ENCODE measurements at regions of chr12 and their contacts with region 1.

Region 1: GRCh38 chr12:110555577-110556406 is 27.3 kb downstream of the PPTC7 start:
- DNase-seq: no peak
- H3K4me3 Mint-ChIP-seq: no peak overlapping the region
- H3K27ac Mint-ChIP-seq: no peak overlapping the region
- H3K4me1 Mint-ChIP-seq: peaks cover 60% of the 10 kb centered on the region
- H3K27me3 Mint-ChIP-seq: no peaks in the 10 kb centered on the region

Region 2: DNA sequence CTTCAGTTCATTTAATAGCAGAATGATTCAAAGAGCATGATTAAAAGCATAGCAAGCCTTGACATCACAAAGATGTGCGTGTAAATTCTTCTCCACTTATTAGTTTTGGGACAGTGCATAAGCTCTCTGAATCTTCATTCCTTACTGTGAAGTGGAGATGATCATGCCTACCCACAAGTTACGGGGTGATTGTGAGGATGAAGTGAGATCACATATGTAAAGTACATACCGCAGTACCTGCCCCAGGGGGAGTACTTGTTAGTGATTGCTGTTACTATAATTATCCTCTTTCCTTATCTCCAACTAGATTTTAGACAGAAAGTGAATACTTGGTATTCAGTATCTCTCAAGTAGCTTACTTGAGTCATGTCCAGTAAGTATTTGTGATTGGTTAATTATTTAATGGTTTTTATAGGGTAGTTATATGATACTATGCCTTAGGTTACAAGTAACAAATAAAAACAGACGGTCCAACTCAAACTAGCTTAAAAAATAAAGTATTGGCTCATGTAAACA is 47.7 kb before region 1 on chr12:
- CTCF ChIA-PET with region 1: interaction called, 5 read pairs
- intact Hi-C with region 1: loop called (anchors 1 kb)
- DNase-seq: no peak
- H3K4me3 Mint-ChIP-seq: no peak overlapping the region
- H3K27ac Mint-ChIP-seq: no peak overlapping the region
- H3K4me1 Mint-ChIP-seq: no peaks in the 10 kb centered on the region
- H3K27me3 Mint-ChIP-seq: no peaks in the 10 kb centered on the region

Region 3: GRCh38 chr12:110590806-110591326 is 35.1 kb after region 1 on chr12:
- CTCF ChIA-PET with region 1: interaction called, 8 read pairs
- intact Hi-C with region 1: loop called (anchors 2 kb)
- DNase-seq: no peak
- H3K4me3 Mint-ChIP-seq: peak overlapping the region; percentile 21
- H3K27ac Mint-ChIP-seq: peak overlapping the region; percentile 90
- H3K4me1 Mint-ChIP-seq: peaks cover 31% of the 10 kb centered on the region
- H3K27me3 Mint-ChIP-seq: no peaks in the 10 kb centered on the region

Region 4: DNA sequence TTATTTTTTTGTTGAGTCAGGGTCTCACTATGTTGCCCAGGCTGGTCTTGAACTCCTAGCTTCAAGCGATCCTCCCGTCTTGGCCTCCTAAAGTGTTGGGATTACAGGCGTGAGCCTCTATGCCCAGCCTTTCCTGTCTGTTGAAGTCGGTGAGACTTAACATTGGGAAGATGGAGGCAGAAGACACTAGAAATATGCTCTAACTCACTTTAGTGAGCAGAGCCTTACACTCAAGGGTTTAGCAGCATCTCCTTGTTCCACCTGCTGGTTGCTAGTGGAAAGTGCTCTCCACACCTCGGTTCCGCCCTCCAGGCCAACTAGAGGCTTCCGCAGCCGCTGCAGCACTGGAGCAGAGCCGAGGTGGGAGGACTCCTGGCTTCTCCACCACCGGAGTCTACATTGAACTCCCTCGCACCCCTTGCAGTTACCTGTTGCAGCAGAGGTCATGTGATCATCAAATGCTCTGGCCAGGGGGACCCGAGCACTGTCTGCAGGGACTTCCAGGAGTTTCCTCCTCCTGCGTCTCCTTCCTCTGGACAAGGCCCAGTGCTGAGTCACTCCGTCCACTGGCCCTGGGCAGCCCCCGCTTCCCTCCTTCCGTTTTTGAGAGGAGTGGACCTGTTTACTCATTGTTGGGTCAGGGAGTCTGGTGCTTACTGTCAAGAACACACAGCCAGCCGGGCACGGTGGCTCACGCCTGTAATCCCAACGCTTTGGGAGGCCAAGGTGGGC is 142.5 kb after region 1 on chr12:
- CTCF ChIA-PET with region 1: no interaction called
- intact Hi-C with region 1: loop called (anchors 2 kb)
- DNase-seq: peak; percentile 90
- H3K4me3 Mint-ChIP-seq: no peak overlapping the region
- H3K27ac Mint-ChIP-seq: peak overlapping the region; percentile 57
- H3K4me1 Mint-ChIP-seq: peaks cover 17% of the 10 kb centered on the region
- H3K27me3 Mint-ChIP-seq: no peaks in the 10 kb centered on the region

Region 5: GRCh38 chr12:111434680-111435338 is 879.0 kb after region 1 on chr12:
- CTCF ChIA-PET with region 1: no interaction called
- intact Hi-C with region 1: no loop called
- DNase-seq: peak; percentile 89
- H3K4me3 Mint-ChIP-seq: peak overlapping the region; percentile 56
- H3K27ac Mint-ChIP-seq: peak overlapping the region; percentile 92
- H3K4me1 Mint-ChIP-seq: peaks cover 91% of the 10 kb centered on the region
- H3K27me3 Mint-ChIP-seq: no peaks in the 10 kb centered on the region

Measured in activated naive CD4-positive, alpha-beta T cell treated with anti-CD3 and anti-CD28 coated beads for 36 hours (primary cell).